ENCODE measurements at regions of chr4 and their contacts with region 1.

Region 1: GRCh38 chr4:54767376-54767775 is 109.6 kb downstream of the KIT start:
- DNase-seq: no peak
- H3K4me3 Mint-ChIP-seq: no peak overlapping the region
- H3K27ac Mint-ChIP-seq: no peak overlapping the region
- H3K4me1 Mint-ChIP-seq: no peaks in the 10 kb centered on the region
- H3K27me3 Mint-ChIP-seq: peaks cover 36% of the 10 kb centered on the region
- CTCF ChIP-seq: no peak

Region 2: DNA sequence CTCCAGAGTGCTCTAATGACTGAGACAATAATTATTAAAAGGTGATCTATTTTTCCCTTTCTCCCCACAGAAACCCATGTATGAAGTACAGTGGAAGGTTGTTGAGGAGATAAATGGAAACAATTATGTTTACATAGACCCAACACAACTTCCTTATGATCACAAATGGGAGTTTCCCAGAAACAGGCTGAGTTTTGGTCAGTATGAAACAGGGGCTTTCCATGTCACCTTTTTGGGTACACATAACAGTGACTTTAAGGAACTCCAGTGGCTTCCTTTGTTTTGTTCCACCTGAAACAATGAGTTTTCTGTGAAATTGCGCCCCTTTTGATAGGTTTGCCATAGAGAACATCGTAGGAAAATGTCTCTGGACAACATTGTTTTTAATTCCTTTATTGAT is 40.0 kb before region 1 on chr4:
- CTCF ChIA-PET with region 1: no interaction called
- POLR2A ChIA-PET with region 1: no interaction called
- intact Hi-C with region 1: no loop called
- DNase-seq: no peak
- H3K4me3 Mint-ChIP-seq: no peak overlapping the region
- H3K27ac Mint-ChIP-seq: no peak overlapping the region
- H3K4me1 Mint-ChIP-seq: no peaks in the 10 kb centered on the region
- H3K27me3 Mint-ChIP-seq: peaks cover 30% of the 10 kb centered on the region
- CTCF ChIP-seq: no peak

Region 3: GRCh38 chr4:54793856-54794422 is 26.6 kb after region 1 on chr4:
- CTCF ChIA-PET with region 1: no interaction called
- POLR2A ChIA-PET with region 1: no interaction called
- intact Hi-C with region 1: loop called (anchors 1 kb)
- DNase-seq: no peak
- H3K4me3 Mint-ChIP-seq: no peak overlapping the region
- H3K27ac Mint-ChIP-seq: no peak overlapping the region
- H3K4me1 Mint-ChIP-seq: no peaks in the 10 kb centered on the region
- H3K27me3 Mint-ChIP-seq: peaks cover 13% of the 10 kb centered on the region
- CTCF ChIP-seq: no peak